ENCODE measurements at regions of chr5 and their contacts with region 1.

Region 1: GRCh38 chr5:112921833-112922817 is at the start of gene REEP5:
- DNase-seq: peak; percentile 84
- H3K4me3 Mint-ChIP-seq: peak within 1 kb of the TSS; percentile 93
- H3K27ac Mint-ChIP-seq: peak within 1 kb of the TSS; percentile 90
- H3K4me1 Mint-ChIP-seq: peaks cover 57% of the 10 kb centered on the region
- H3K27me3 Mint-ChIP-seq: no peaks in the 10 kb centered on the region
- total RNA-seq, gene REEP5: 83.4 and 85.6 TPM in 2 replicates

Region 2: DNA sequence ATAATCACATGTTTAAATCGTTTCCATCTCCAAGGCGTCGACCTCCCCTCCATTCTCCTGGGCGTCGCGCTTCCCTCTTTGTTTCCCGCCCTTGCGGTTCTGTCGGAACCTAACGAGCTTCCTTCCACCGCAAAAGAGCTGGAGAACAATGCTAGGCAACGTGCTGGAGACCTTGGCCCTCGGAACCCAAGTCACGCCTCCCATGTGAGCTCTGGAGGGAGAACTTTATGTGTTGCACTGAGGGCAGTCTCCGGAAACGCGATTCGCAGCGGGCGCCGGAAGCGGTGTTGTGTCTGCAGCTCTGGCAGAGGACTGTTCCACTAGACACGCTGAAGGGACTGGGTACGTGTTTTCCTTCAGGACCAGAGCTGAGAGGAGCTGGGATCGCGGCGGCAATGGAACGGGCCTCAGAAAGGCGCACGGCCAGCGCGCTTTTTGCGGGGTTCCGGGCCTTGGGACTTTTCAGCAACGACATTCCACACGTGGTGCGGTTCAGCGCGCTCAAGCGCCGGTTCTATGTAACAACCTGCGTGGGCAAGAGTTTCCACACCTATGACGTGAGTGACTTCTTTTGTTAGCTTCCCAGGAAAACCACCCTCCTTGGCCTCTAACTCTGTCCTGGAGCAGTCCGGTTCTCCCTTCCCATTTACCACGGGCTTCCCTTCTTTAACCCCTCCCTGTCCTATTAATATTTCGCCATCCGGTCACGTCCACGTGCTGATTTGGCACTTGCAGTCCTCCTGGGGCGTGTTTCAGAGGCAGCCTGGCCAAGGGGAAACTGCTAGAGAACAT is 1829.9 kb before region 1 on chr5 and contains the start of gene WDR36:
- intact Hi-C with region 1: loop called (anchors 5 kb)
- DNase-seq: peak; percentile 86
- H3K4me3 Mint-ChIP-seq: peak within 1 kb of the TSS; percentile 95
- H3K27ac Mint-ChIP-seq: peak within 1 kb of the TSS; percentile 92
- H3K4me1 Mint-ChIP-seq: peaks cover 31% of the 10 kb centered on the region
- H3K27me3 Mint-ChIP-seq: peaks cover 4% of the 10 kb centered on the region
- total RNA-seq, gene WDR36: 77.9 and 79.9 TPM in 2 replicates

Region 3: GRCh38 chr5:112860929-112861637 is 61.0 kb before region 1 on chr5 and contains the start of gene SRP19:
- intact Hi-C with region 1: loop called (anchors 2 kb)
- DNase-seq: peak; percentile 89
- H3K4me3 Mint-ChIP-seq: peak within 1 kb of the TSS; percentile 94
- H3K27ac Mint-ChIP-seq: peak within 1 kb of the TSS; percentile 97
- H3K4me1 Mint-ChIP-seq: peaks cover 34% of the 10 kb centered on the region
- H3K27me3 Mint-ChIP-seq: peaks cover 4% of the 10 kb centered on the region
- total RNA-seq, gene SRP19: 63.0 and 66.3 TPM in 2 replicates

Region 4: GRCh38 chr5:112968411-112969106 is 46.4 kb after region 1 on chr5:
- intact Hi-C with region 1: loop called (anchors 1 kb)
- DNase-seq: no peak
- H3K4me3 Mint-ChIP-seq: no peak overlapping the region
- H3K27ac Mint-ChIP-seq: no peak overlapping the region
- H3K4me1 Mint-ChIP-seq: peaks cover 25% of the 10 kb centered on the region
- H3K27me3 Mint-ChIP-seq: no peaks in the 10 kb centered on the region

Region 5: GRCh38 chr5:113022661-113023060 is 100.5 kb after region 1 on chr5:
- intact Hi-C with region 1: loop called (anchors 2 kb)
- DNase-seq: peak; percentile 26
- H3K4me3 Mint-ChIP-seq: peak overlapping the region; percentile 24
- H3K27ac Mint-ChIP-seq: peak overlapping the region; percentile 42
- H3K4me1 Mint-ChIP-seq: peaks cover 63% of the 10 kb centered on the region
- H3K27me3 Mint-ChIP-seq: no peaks in the 10 kb centered on the region

Region 6: GRCh38 chr5:113390224-113390623 is 468.1 kb after region 1 on chr5:
- intact Hi-C with region 1: no loop called
- DNase-seq: no peak
- H3K4me3 Mint-ChIP-seq: no peak overlapping the region
- H3K27ac Mint-ChIP-seq: no peak overlapping the region
- H3K4me1 Mint-ChIP-seq: peaks cover 22% of the 10 kb centered on the region
- H3K27me3 Mint-ChIP-seq: peaks cover 33% of the 10 kb centered on the region